Cardiac septum (tissue), 1 donor: ENCODE measurements at regions of chr19 and their contacts with region 1.

Region 1: DNA sequence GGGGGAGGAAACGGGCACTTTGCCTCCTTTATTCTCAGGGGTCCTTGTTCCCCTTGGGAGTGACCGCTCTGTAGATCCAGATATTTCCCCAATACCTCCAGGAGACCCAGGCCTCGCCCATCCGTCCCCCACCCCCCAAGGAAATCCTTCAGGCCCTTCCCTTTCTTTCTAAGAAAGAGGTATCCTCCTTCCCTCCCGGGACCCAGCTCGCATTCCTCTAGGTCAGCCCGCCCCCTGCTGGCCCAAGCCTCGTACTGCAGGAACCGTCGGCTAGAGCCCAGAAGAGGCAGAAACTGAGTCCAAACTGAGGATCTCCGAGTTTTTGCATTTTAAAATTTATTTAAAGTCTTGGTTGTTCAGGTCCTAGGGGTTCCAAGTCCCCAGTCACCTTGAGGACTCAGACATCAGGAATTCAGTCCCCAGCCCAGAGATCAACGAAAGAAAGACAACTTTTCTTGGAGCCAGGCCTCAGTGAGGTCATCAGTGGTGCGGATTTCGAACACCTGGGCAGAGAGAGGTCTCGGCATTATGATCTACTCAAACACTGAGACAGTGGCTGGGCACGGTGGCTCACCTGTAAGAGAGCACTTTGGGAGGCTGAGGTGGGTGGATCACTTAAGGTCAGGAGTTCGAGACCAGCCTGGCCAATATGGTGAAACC is 7.5 kb upstream of the LRFN1 start:
- DNase-seq: peak; percentile 92

Region 2: DNA sequence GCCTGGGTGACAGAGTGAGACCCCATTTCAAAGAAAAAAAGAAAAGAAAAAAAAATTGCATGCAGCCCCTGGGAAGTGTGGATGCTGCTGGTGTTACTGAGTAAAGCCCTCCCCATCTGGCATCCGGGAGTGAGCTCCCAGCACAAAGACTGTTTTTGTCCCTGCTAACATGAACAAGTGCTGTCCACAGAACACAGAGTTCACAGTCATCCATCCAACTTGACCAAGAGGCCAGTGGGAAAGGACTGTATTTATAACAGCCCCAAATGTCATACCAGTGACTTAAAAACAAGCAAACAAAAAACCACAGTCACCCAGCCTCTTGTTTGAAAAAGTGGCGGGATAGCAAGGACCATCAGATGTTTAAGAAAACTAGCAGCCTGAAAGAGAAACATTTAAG is 363.4 kb before region 1 on chr19:
- intact Hi-C with region 1: loop called (anchors 10 kb)
- DNase-seq: no peak

Region 3: DNA sequence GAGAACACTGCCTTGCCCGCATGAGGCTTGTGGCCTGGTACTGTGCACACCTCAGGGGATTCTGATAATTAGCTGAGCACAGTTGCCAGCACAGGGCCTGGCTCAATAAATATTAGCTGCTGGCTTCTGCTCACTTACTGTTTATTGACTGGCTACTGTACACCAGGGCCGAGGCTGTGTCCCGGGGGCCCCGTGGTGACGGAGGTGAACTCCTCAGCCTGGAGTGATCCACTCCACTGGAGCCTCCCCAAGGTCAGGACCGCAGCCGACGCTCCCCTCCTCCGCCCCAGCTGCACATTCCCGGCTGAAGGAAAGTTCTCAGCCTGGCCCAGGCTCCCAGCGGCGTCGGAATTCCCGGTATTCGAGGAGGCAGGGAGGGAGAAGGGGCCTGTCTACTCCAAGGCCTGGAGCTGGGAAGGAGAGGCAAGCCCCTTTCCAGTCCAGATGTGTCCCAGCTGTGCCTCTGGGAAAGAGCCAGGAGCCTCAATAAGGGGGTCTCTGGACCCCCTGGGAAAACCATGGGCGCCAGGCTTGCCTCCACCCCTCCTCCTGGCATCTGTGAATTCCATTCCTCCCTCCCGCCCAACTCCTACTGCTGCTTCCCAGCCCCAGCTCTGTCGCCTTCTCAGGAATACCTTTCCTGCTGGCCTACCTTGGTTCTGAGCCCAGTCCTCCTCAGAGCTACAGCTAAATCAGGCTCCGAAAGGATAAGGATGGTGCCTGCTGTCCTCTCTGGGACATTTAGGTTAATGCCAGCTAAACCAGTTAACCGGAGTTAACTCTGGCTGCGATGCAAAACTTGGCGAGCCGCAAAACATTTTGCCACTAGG is 100.3 kb after region 1 on chr19:
- intact Hi-C with region 1: no loop called
- DNase-seq: peak; percentile 82